CD8-positive, alpha-beta T cell (primary cell): ENCODE measurements at regions of chr9 and their contacts with region 1.

Region 1: DNA sequence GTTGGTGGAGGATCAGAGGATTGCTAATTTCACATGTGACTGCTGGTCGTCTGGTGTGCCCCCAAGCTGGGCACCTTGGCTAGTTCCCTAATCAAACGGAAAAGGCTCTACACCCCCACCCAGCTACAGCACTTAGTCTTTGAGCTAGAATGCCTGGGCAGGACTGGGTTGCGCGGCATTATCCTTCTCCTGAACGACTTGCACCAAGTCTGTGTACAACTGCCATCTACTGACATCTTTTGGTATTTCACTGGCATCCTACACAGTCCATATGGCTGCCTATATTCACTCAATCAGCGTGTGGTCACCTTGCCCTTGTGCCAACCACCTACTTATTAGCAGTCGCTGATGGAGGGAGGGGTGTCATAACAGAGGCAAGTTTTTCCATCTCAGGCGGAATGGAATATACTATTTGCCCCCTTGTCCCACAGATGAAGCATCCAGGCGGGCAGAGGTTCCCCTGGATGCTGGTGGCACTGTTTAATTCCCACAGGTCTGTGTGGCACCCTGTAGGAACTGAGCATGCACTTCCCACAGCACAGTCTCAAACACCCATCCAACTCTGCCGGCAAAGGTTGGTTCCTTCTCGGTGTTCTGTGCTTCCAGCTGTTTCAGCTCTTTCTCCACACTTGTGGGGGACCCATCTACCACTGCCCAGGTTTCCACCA is 150.1 kb downstream of the OSTF1 start:
- DNase-seq: peak in 7 of 9 experiments; percentile 1 to 70 (median 27)
- ATAC-seq: peak; percentile 93
- H3K4me3 ChIP-seq: no peak overlapping the region
- H3K4me3 Mint-ChIP-seq: no peak overlapping the region
- H3K27ac ChIP-seq: no peak overlapping the region
- H3K27ac Mint-ChIP-seq: no peak overlapping the region
- H3K4me1 ChIP-seq: no peaks in the 10 kb centered on the region
- H3K4me1 Mint-ChIP-seq: no peaks in the 10 kb centered on the region
- H3K27me3 ChIP-seq: no peaks in the 10 kb centered on the region
- H3K27me3 Mint-ChIP-seq: no peaks in the 10 kb centered on the region
- CTCF ChIP-seq: peak; percentile 62

Region 2: GRCh38 chr9:75083188-75083970 is 155.1 kb before region 1 on chr9:
- CTCF ChIA-PET with region 1: interaction called, 7 read pairs
- POLR2A ChIA-PET with region 1: no interaction called
- intact Hi-C with region 1: loop called in 1 of 2 experiments (anchors 2 kb)
- DNase-seq: peak in 6 of 9 experiments; percentile 18 to 79 (median 59)
- ATAC-seq: peak; percentile 47
- H3K4me3 ChIP-seq: no peak overlapping the region
- H3K4me3 Mint-ChIP-seq: no peak overlapping the region
- H3K27ac ChIP-seq: peak overlapping the region in 1 of 2 experiments; percentile 53
- H3K27ac Mint-ChIP-seq: peak overlapping the region; percentile 91
- H3K4me1 ChIP-seq: peaks cover 22% of the 10 kb centered on the region
- H3K4me1 Mint-ChIP-seq: peaks cover 45% of the 10 kb centered on the region
- H3K27me3 ChIP-seq: no peaks in the 10 kb centered on the region
- H3K27me3 Mint-ChIP-seq: no peaks in the 10 kb centered on the region
- CTCF ChIP-seq: no peak

Region 3: DNA sequence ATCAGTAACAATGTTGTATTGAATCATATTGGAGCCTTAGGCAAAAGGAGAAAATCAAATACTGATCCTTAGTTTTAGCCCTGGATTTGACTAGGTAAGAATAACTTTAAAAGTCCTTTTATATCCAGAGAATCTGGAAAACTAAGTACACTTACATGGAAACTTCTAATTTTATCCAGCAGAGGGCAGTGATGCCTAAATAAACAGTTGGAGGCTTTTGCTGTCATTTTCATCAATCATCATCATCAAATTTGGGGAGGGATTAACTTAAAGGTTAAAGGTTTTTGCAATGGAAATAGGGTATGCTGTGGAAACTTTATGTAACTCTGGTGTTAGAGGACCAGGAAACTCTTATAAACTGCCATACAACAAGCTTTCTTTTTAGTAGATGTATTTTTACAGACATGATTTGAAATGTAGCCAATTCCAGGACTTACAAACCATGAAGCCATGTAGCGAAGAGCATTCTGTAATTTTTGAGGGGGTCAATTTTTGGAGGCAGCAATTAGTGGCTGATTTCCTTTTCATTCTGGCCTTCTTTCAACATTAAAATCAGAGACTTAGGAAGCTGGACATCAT is 37.5 kb before region 1 on chr9:
- CTCF ChIA-PET with region 1: interaction called, 9 read pairs
- POLR2A ChIA-PET with region 1: no interaction called
- intact Hi-C with region 1: loop called (anchors 1 kb)
- DNase-seq: peak in 2 of 9 experiments; percentile 54 to 62
- ATAC-seq: no peak
- H3K4me3 ChIP-seq: no peak overlapping the region
- H3K4me3 Mint-ChIP-seq: no peak overlapping the region
- H3K27ac ChIP-seq: no peak overlapping the region
- H3K27ac Mint-ChIP-seq: no peak overlapping the region
- H3K4me1 ChIP-seq: no peaks in the 10 kb centered on the region
- H3K4me1 Mint-ChIP-seq: no peaks in the 10 kb centered on the region
- H3K27me3 ChIP-seq: no peaks in the 10 kb centered on the region
- H3K27me3 Mint-ChIP-seq: no peaks in the 10 kb centered on the region
- CTCF ChIP-seq: peak; percentile 65

Region 4: GRCh38 chr9:75289332-75289731 is 50.9 kb after region 1 on chr9:
- CTCF ChIA-PET with region 1: no interaction called
- POLR2A ChIA-PET with region 1: no interaction called
- intact Hi-C with region 1: no loop called
- DNase-seq: no peak
- ATAC-seq: no peak
- H3K4me3 ChIP-seq: no peak overlapping the region
- H3K4me3 Mint-ChIP-seq: no peak overlapping the region
- H3K27ac ChIP-seq: no peak overlapping the region
- H3K27ac Mint-ChIP-seq: no peak overlapping the region
- H3K4me1 ChIP-seq: no peaks in the 10 kb centered on the region
- H3K4me1 Mint-ChIP-seq: no peaks in the 10 kb centered on the region
- H3K27me3 ChIP-seq: no peaks in the 10 kb centered on the region
- H3K27me3 Mint-ChIP-seq: peaks cover 2% of the 10 kb centered on the region
- CTCF ChIP-seq: no peak

Region 5: DNA sequence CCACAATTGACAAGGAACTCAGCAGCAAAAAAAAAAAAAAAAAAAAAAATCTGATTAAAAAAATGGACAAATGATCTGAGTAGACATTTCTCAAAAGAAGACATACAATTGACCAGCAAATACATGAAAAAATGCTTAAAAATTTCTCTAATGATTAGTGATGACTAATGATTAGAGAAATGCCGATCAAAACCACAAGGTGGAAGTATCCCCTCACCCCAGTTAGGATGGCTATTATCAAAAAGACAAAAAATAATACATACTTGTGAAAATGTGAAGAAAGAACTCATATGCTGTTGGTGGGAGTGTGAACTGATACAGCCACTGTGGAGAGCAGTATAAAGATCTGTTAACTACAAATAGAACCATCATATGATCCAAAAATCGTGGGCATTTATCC is 95.2 kb after region 1 on chr9:
- CTCF ChIA-PET with region 1: no interaction called
- POLR2A ChIA-PET with region 1: no interaction called
- intact Hi-C with region 1: no loop called
- DNase-seq: no peak
- ATAC-seq: no peak
- H3K4me3 ChIP-seq: no peak overlapping the region
- H3K4me3 Mint-ChIP-seq: no peak overlapping the region
- H3K27ac ChIP-seq: no peak overlapping the region
- H3K27ac Mint-ChIP-seq: no peak overlapping the region
- H3K4me1 ChIP-seq: no peaks in the 10 kb centered on the region
- H3K4me1 Mint-ChIP-seq: no peaks in the 10 kb centered on the region
- H3K27me3 ChIP-seq: no peaks in the 10 kb centered on the region
- H3K27me3 Mint-ChIP-seq: no peaks in the 10 kb centered on the region
- CTCF ChIP-seq: no peak